IMR-90 (cell line): ENCODE measurements at regions of chr20 and their contacts with region 1.

Region 1: GRCh38 chr20:63782051-63782471 is 42.5 kb downstream of the SLC2A4RG start:
- DNase-seq: no peak
- ATAC-seq: no peak
- H3K4me3 ChIP-seq: no peak overlapping the region
- H3K27ac ChIP-seq: no peak overlapping the region
- H3K4me1 ChIP-seq: no peaks in the 10 kb centered on the region
- H3K27me3 ChIP-seq: no peaks in the 10 kb centered on the region
- CTCF ChIP-seq: no peak
- POLR2A ChIP-seq: no peak
- RAD21 ChIP-seq: no peak

Region 2: GRCh38 chr20:63587776-63588591 is 194.1 kb before region 1 on chr20:
- CTCF ChIA-PET with region 1: no interaction called
- POLR2A ChIA-PET with region 1: no interaction called
- dilution Hi-C with region 1: no loop called
- in situ Hi-C with region 1: no loop called
- intact Hi-C with region 1: no loop called
- DNase-seq: no peak
- ATAC-seq: no peak
- H3K4me3 ChIP-seq: no peak overlapping the region
- H3K27ac ChIP-seq: no peak overlapping the region
- H3K4me1 ChIP-seq: no peaks in the 10 kb centered on the region
- H3K27me3 ChIP-seq: no peaks in the 10 kb centered on the region
- CTCF ChIP-seq: no peak
- POLR2A ChIP-seq: no peak
- RAD21 ChIP-seq: no peak

Region 3: GRCh38 chr20:63858393-63859165 is 76.5 kb after region 1 on chr20:
- CTCF ChIA-PET with region 1: interaction called, 3 read pairs
- POLR2A ChIA-PET with region 1: no interaction called
- dilution Hi-C with region 1: no loop called
- in situ Hi-C with region 1: loop called (anchors 5 kb)
- intact Hi-C with region 1: no loop called
- DNase-seq: peak; percentile 59
- ATAC-seq: peak; percentile 45
- H3K4me3 ChIP-seq: no peak overlapping the region
- H3K27ac ChIP-seq: no peak overlapping the region; the same call in 1 of the 2 replicates
- H3K4me1 ChIP-seq: peaks cover 29% of the 10 kb centered on the region
- H3K27me3 ChIP-seq: no peaks in the 10 kb centered on the region; the same call in 1 of the 2 replicates
- CTCF ChIP-seq: peak; percentile 50
- POLR2A ChIP-seq: no peak
- RAD21 ChIP-seq: peak; percentile 57

Region 4: DNA sequence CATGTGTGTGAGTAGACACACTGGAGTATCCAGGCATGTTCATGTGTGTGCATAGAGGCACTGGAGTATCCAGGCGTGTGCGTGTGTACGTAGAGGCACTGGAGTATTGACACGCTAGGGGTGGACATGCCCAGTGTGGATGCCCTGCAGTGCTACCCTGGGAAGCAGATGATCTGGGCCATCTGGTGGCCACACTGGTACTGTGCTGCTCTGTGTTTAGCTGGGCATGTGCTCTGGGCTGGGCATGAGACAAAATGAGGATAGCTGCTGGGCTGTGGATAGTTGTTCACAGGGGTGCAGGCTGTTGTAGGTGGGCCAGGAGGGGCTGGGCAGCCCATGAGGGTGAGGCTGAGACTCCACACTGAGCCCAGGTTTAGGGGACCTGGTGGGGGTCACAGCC is 349.3 kb after region 1 on chr20:
- CTCF ChIA-PET with region 1: no interaction called
- POLR2A ChIA-PET with region 1: no interaction called
- dilution Hi-C with region 1: no loop called
- in situ Hi-C with region 1: no loop called
- intact Hi-C with region 1: no loop called
- DNase-seq: no peak
- ATAC-seq: peak; percentile 78
- H3K4me3 ChIP-seq: no peak overlapping the region
- H3K27ac ChIP-seq: no peak overlapping the region
- H3K4me1 ChIP-seq: no peaks in the 10 kb centered on the region
- H3K27me3 ChIP-seq: peaks cover 12% of the 10 kb centered on the region
- CTCF ChIP-seq: no peak
- POLR2A ChIP-seq: no peak
- RAD21 ChIP-seq: peak; percentile 11; the same call in 1 of the 2 replicates